ENCODE measurements at regions of chr11 and their contacts with region 1.

Region 1: DNA sequence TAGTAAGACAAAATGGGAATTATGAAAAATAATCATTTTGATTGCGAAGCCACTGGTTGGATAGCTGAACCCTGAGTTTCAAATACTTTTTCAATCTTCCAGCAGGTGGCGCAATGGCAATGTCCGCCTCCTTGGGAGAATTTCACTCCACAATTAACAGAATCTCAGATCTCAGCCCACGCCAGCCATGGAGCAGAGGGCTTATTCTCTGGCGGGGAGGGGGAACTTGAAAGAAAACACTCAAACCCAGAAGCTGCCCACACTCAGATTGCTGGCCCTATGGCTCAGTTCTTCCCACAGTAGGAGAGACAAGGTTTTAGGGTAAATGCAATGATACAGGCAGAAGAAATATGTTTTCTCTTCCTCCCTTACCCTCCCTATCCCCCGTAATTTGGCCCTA is 38.7 kb upstream of the RCN1 start:
- DNase-seq: peak; percentile 5 to 51 (median 42)
- ATAC-seq: peak; percentile 45
- H3K4me3 ChIP-seq: no peak overlapping the region
- H3K4me3 Mint-ChIP-seq: no peak overlapping the region
- H3K27ac ChIP-seq: no peak overlapping the region
- H3K27ac Mint-ChIP-seq: no peak overlapping the region
- H3K4me1 ChIP-seq: no peaks in the 10 kb centered on the region
- H3K4me1 Mint-ChIP-seq: peaks cover 0 to 2% (median 0%) of the 10 kb centered on the region in 7 donors
- H3K27me3 ChIP-seq: no peaks in the 10 kb centered on the region
- H3K27me3 Mint-ChIP-seq: peaks cover 28 to 70% (median 47%) of the 10 kb centered on the region in 5 donors

Region 2: GRCh38 chr11:32297611-32298011 is 245.4 kb after region 1 on chr11:
- CTCF ChIA-PET with region 1: no interaction called
- POLR2A ChIA-PET with region 1: no interaction called
- intact Hi-C with region 1: loop called (anchors 1 to 5 kb)
- DNase-seq: peak in 2 of 9 donors; percentile 2 to 5
- ATAC-seq: no peak
- H3K4me3 ChIP-seq: no peak overlapping the region
- H3K4me3 Mint-ChIP-seq: no peak overlapping the region
- H3K27ac ChIP-seq: no peak overlapping the region
- H3K27ac Mint-ChIP-seq: peak overlapping the region in 1 of 9 donors; percentile 65
- H3K4me1 ChIP-seq: no peaks in the 10 kb centered on the region
- H3K4me1 Mint-ChIP-seq: peaks cover 0 to 5% (median 0%) of the 10 kb centered on the region in 7 donors
- H3K27me3 ChIP-seq: no peaks in the 10 kb centered on the region
- H3K27me3 Mint-ChIP-seq: peaks cover 0 to 10% (median 2%) of the 10 kb centered on the region in 5 donors

Measured in naive thymus-derived CD4-positive, alpha-beta T cell (primary cell).